ENCODE measurements at regions of chr21 and their contacts with region 1.

Region 1: DNA sequence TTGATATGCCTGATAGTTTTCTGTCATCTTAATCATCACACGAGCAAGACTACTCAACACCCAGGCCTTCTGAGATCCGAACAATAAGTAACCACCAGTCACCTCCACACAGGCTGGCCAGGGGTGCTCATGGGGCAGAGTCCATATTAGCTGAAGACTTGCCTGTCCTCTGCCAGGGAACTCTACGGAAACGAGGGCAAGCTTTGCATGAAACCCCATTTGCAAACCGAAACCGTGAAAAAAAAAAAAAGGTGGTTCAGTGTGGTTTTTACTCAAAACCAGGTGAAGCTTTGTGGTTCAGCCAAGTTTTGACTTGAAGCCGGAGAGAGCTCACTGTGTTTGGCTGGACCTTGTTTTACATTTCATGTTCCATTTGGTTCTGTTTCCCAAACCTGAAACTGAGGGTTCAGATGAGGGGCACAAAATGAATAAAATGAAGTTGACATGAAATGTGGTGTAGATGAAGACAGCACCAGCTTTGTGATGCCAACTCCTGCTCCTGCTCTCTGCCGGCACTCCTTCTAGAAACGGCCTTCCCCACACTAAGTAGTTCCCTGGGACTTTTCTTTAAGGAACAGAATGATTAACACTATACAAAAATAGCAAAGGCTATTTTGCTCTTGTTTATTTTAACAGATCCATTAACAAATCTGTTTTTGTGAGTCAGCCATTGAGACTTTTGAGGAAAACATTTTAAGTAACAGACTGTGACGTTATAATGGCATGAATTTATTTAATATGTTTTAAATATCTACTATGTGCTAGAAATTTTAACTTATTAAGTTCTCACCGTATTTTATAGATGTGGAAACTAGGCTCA is 74.7 kb downstream of the RUNX1 start:
- DNase-seq: no peak
- ATAC-seq: peak; percentile 90
- H3K4me3 Mint-ChIP-seq: peak overlapping the region; percentile 53
- H3K27ac Mint-ChIP-seq: peak overlapping the region; percentile 74
- H3K4me1 Mint-ChIP-seq: peaks cover 46% of the 10 kb centered on the region
- H3K27me3 Mint-ChIP-seq: no peaks in the 10 kb centered on the region
- CTCF ChIP-seq: no peak

Region 2: DNA sequence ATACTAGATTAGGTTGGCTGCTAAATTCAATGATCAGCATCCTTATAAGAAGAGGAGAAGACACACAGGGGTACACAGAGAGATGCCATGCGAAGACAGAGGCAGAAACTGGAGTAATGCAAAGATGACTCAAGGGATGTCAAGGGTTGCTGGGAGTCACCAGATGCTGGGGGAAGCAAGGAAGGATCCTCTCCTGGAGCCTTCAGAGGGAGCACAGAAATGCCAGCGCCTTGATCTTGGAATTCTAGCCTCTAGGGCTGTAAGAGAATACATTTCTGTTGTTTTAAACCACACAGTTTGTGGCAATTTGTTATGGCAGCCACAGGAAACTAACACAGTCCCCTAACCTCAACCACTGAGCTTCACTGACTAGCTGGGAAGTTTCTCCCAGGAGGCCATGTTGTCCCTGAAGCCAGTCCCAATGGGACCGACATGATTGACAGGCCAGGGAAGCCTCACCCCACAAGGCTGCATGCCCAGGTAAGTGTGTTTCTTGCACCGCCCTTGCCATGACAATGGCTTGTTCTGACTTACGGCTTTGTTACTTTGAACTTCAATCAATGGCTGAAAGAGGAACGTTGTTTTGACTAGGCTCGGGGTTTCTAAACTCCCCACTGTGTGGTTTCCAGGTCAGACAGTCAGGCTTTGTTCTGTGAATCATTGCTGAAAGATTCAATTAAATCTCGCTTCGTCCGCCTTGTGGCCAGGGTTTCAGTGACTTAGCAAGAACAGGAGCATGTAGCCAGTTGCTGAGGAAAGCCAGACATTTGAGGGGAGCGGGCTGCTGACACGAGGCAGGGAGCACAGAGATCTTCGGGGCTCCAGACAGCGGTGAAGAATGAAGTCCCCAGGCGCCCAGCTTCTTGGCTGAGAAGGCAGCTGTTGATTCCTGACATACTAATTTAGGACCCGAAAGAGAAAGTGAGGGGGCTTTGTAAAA is 12.5 kb after region 1 on chr21:
- CTCF ChIA-PET with region 1: no interaction called
- POLR2A ChIA-PET with region 1: interaction called, 20 read pairs
- intact Hi-C with region 1: loop called (anchors 1 kb)
- DNase-seq: peak; percentile 36
- ATAC-seq: peak; percentile 74
- H3K4me3 Mint-ChIP-seq: peak overlapping the region; percentile 69
- H3K27ac Mint-ChIP-seq: peak overlapping the region; percentile 78
- H3K4me1 Mint-ChIP-seq: peaks cover 78% of the 10 kb centered on the region
- H3K27me3 Mint-ChIP-seq: no peaks in the 10 kb centered on the region
- CTCF ChIP-seq: no peak

Measured in activated B cell treated with CpG ODN at 0.5 μM for 24 hours (primary cell).